Naive thymus-derived CD8-positive, alpha-beta T cell (primary cell): ENCODE measurements at regions of chrX and their contacts with region 1.

Region 1: DNA sequence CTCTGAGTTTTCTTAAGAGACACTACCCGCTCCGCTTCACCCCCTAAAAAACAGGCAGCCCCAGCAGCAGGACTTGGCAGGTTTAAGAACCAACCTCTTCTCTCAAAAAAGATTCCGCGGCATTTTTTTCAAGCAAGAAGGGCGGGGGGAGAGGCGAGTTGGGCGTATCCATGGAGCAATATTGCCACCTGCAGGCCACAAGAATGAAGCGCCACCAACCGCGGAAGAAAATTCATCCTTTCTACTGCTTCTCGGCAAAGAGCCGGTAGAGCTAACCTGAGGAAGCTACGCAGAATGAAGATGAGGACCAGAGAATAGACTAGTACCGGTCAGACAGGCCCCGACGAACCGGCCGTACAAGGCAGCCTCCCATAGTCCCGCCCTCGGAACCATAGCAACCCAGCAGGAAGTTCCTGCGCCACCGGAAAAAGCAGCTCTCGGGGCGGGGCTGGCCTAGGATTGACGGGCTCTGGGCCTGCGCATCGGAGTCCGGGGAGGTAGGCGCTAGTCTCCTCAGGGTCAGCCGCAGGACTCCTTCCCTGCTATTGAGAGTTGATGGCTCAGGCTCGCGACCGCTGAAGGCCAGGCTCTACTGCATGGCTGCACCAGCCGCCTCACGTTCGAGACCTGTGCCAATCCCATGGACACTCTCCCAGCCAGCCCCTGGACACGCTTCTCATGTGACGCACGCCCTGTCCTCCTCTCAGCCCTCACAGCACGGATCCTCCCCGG is 76.9 kb downstream of the MAGED4 start:
- DNase-seq: peak; percentile 67 to 96 (median 81)
- ATAC-seq: peak; percentile 90 to 94
- H3K4me3 Mint-ChIP-seq: peak overlapping the region; percentile 86 to 100 (median 96)
- H3K27ac Mint-ChIP-seq: peak overlapping the region; percentile 96 to 99 (median 98)
- H3K4me1 Mint-ChIP-seq: peaks cover 4 to 18% (median 14%) of the 10 kb centered on the region in 4 donors
- H3K27me3 Mint-ChIP-seq: peaks cover 3 to 15% (median 5%) of the 10 kb centered on the region in 5 donors

Region 2: GRCh38 chrX:51892921-51893745 is 368.5 kb before region 1 on chrX and contains the start of gene MAGED1:
- POLR2A ChIA-PET with region 1: interaction called, 12 read pairs
- DNase-seq: peak; percentile 58 to 90 (median 78)
- ATAC-seq: peak; percentile 77 to 81
- H3K4me3 Mint-ChIP-seq: peak within 1 kb of the TSS; percentile 89 to 97 (median 94)
- H3K27ac Mint-ChIP-seq: peak within 1 kb of the TSS; percentile 90 to 98 (median 94)
- H3K4me1 Mint-ChIP-seq: peaks cover 8 to 31% (median 25%) of the 10 kb centered on the region in 4 donors
- H3K27me3 Mint-ChIP-seq: no peaks in the 10 kb centered on the region
- polyA plus RNA-seq, gene MAGED1: 48.7 to 81.9 (median 49.9) TPM

Region 3: GRCh38 chrX:52923781-52924241 is 662.2 kb after region 1 on chrX:
- POLR2A ChIA-PET with region 1: interaction called, 10 read pairs
- DNase-seq: no peak
- ATAC-seq: no peak
- H3K4me3 Mint-ChIP-seq: peak overlapping the region in 1 of 10 donors; percentile 28
- H3K27ac Mint-ChIP-seq: peak overlapping the region in 2 of 10 donors; percentile 23 to 46
- H3K4me1 Mint-ChIP-seq: peaks cover 7 to 23% (median 14%) of the 10 kb centered on the region in 4 donors
- H3K27me3 Mint-ChIP-seq: peaks cover 0 to 2% (median 0%) of the 10 kb centered on the region in 5 donors